ENCODE measurements at regions of chr14 and their contacts with region 1.

Region 1: GRCh38 chr14:92832137-92832700 is 38.1 kb downstream of the GOLGA5 start:
- DNase-seq: no peak
- H3K4me3 ChIP-seq: no peak overlapping the region
- H3K4me3 Mint-ChIP-seq: no peak overlapping the region
- H3K27ac ChIP-seq: no peak overlapping the region
- H3K27ac Mint-ChIP-seq: peak overlapping the region in 2 of 7 donors; percentile 45 to 59
- H3K4me1 ChIP-seq: no peaks in the 10 kb centered on the region
- H3K4me1 Mint-ChIP-seq: no peaks in the 10 kb centered on the region
- H3K27me3 ChIP-seq: no peaks in the 10 kb centered on the region
- H3K27me3 Mint-ChIP-seq: no peaks in the 10 kb centered on the region

Region 2: GRCh38 chr14:93132470-93133065 is 300.3 kb after region 1 on chr14:
- CTCF ChIA-PET with region 1: no interaction called
- POLR2A ChIA-PET with region 1: no interaction called
- intact Hi-C with region 1: loop called (anchors 10 kb)
- DNase-seq: peak in 2 of 5 donors; percentile 19 to 22
- H3K4me3 ChIP-seq: no peak overlapping the region
- H3K4me3 Mint-ChIP-seq: no peak overlapping the region
- H3K27ac ChIP-seq: no peak overlapping the region
- H3K27ac Mint-ChIP-seq: no peak overlapping the region
- H3K4me1 ChIP-seq: no peaks in the 10 kb centered on the region
- H3K4me1 Mint-ChIP-seq: no peaks in the 10 kb centered on the region
- H3K27me3 ChIP-seq: no peaks in the 10 kb centered on the region
- H3K27me3 Mint-ChIP-seq: no peaks in the 10 kb centered on the region

Measured in CD4-positive, alpha-beta memory T cell (primary cell).